ENCODE measurements at regions of chr4 and their contacts with region 1.

Region 1: DNA sequence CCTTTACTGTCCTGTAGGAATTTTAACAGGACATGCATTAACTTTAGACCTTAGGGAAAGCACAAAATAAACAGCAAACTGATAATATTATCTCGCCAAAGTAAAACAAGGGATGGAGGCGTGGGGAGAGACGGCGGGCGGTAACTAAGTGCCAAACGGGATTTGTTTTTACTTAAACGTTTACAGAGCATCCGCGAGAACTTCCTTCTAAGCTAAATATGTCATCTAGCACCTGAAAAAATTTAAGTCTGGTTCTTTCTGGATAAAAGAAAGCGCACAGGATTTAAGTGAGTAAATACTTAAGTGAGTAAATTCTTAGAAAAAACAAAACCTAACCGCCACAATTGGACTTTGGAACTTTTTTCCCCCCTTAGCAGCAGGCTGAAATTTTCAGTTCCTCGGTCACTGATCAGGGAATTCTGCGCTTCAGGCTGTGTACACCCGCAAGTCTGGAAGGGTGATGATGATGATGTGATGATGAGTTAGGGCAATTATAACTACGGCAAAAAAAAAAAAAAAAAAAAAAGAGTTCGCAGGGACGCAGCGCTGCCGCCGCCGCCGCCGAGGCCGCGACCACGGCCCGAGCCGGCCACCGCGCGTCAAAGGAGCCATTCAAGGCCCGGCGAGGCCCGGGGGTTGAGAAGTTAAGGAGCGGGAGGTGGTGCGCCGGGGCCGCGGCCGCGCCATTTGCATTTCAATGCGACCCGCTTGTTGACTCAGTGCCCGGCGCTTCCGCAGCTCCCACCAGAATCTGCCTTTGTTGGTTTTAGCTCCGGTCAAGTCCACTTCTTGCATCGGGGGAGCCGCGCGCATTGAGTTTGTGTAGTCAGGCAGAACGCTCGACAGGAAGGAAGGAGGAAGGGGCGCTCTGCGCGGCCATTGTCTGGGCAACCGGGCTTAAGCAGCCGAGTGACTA is 108.8 kb downstream of the SPRY1 start:
- DNase-seq: peak; percentile 74
- H3K4me3 ChIP-seq: peak overlapping the region; percentile 35 to 72 (median 61)
- H3K27ac ChIP-seq: peak overlapping the region; percentile 65
- H3K4me1 ChIP-seq: peaks cover 16% of the 10 kb centered on the region
- H3K27me3 ChIP-seq: no peaks in the 10 kb centered on the region
- CTCF ChIP-seq: no peak
- POLR2A ChIP-seq: no peak

Region 2: DNA sequence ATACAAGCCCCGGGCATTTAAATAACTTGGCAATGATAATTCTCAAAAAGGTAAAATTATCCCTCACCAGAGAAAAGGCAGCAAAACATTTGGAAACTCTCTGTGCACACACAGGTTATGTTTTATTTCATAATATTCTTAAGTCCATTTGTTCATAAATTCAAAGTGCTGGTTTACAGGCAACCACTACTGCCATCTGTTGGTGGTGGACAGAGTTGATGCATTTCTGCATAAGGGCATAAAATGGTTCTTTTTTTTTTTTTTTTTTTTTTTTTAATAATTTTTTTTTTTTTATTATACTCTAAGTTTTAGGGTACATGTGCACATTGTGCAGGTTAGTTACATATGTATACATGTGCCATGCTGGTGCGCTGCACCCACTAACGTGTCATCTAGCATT is 853.0 kb before region 1 on chr4:
- CTCF ChIA-PET with region 1: no interaction called
- POLR2A ChIA-PET with region 1: no interaction called
- dilution Hi-C with region 1: no loop called
- intact Hi-C with region 1: no loop called
- DNase-seq: peak; percentile 63
- H3K4me3 ChIP-seq: no peak overlapping the region
- H3K27ac ChIP-seq: no peak overlapping the region
- H3K4me1 ChIP-seq: no peaks in the 10 kb centered on the region
- H3K27me3 ChIP-seq: no peaks in the 10 kb centered on the region
- CTCF ChIP-seq: peak; percentile 51 to 52
- POLR2A ChIP-seq: no peak

Region 3: GRCh38 chr4:123304151-123304964 is 201.0 kb before region 1 on chr4:
- CTCF ChIA-PET with region 1: no interaction called
- POLR2A ChIA-PET with region 1: no interaction called
- dilution Hi-C with region 1: no loop called
- intact Hi-C with region 1: no loop called
- DNase-seq: no peak
- H3K4me3 ChIP-seq: no peak overlapping the region
- H3K27ac ChIP-seq: no peak overlapping the region
- H3K4me1 ChIP-seq: no peaks in the 10 kb centered on the region
- H3K27me3 ChIP-seq: no peaks in the 10 kb centered on the region
- CTCF ChIP-seq: no peak
- POLR2A ChIP-seq: no peak

Region 4: DNA sequence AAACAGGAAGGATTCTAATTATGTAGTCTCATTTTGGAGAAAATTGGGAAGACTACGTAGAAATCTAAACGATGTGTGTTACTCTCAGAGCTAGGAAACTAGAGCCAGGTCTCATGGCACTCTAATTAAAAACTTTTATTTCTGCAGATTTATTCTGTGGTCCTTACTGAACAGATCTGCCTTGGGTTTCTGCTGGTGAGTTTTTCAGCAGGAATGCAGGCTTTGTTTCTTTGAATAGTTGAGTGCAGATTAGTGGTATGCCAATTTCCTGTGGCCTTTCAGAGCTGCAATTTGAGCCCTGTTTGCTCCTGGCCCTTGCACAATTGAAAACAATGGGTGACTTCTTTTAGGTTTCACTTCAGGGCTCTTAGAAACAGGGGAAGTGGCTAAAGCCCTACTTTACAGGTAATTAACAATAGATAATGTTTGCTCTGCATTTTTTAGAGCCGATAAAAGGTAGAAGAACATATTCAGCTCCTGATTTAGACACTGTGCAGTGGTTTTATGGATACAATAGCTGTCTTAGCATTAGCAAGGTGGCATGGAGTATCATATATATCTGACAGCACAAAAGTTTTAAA is 86.9 kb before region 1 on chr4:
- CTCF ChIA-PET with region 1: no interaction called
- POLR2A ChIA-PET with region 1: no interaction called
- dilution Hi-C with region 1: no loop called
- intact Hi-C with region 1: loop called (anchors 1 kb)
- DNase-seq: peak; percentile 82
- H3K4me3 ChIP-seq: peak overlapping the region in 1 of 3 experiments; percentile 34
- H3K27ac ChIP-seq: peak overlapping the region; percentile 58
- H3K4me1 ChIP-seq: peaks cover 45% of the 10 kb centered on the region
- H3K27me3 ChIP-seq: no peaks in the 10 kb centered on the region
- CTCF ChIP-seq: no peak
- POLR2A ChIP-seq: no peak

Region 5: GRCh38 chr4:124535003-124535402 is 1029.7 kb after region 1 on chr4:
- CTCF ChIA-PET with region 1: no interaction called
- POLR2A ChIA-PET with region 1: no interaction called
- dilution Hi-C with region 1: no loop called
- intact Hi-C with region 1: no loop called
- DNase-seq: no peak
- H3K4me3 ChIP-seq: no peak overlapping the region
- H3K27ac ChIP-seq: no peak overlapping the region
- H3K4me1 ChIP-seq: no peaks in the 10 kb centered on the region
- H3K27me3 ChIP-seq: no peaks in the 10 kb centered on the region
- CTCF ChIP-seq: no peak
- POLR2A ChIP-seq: no peak